Activated CD8-positive, alpha-beta T cell treated with anti-CD3 and anti-CD28 coated beads for 36 hours (primary cell): ENCODE measurements at regions of chr14 and their contacts with region 1.

Region 1: GRCh38 chr14:102819176-102819628 is 42.0 kb downstream of the TRAF3 start:
- DNase-seq: peak; percentile 86
- ATAC-seq: peak; percentile 75
- H3K4me3 Mint-ChIP-seq: peak overlapping the region; percentile 55
- H3K27ac Mint-ChIP-seq: peak overlapping the region; percentile 92
- H3K4me1 Mint-ChIP-seq: peaks cover 80% of the 10 kb centered on the region
- H3K27me3 Mint-ChIP-seq: no peaks in the 10 kb centered on the region
- CTCF ChIP-seq: no peak

Region 2: DNA sequence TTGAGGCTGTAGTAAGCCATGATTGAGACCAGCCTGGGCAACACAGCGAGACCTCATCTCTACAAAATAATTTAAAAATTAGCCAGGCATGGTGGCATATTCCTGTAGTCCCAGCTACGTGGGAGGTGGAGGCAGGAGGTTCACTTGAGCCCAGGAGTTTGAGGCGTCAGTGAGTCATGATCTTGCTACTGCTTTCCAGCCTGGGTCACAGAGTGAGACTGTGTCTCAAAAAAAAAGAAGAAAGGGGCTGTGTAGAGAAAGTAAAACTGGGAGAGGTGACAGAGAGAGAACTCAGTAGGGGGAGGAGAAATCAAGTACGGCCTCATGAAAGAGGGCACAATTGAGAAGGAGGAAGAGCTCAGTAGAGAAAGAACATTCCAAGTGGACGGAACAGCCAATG is 444.1 kb before region 1 on chr14:
- CTCF ChIA-PET with region 1: no interaction called
- POLR2A ChIA-PET with region 1: no interaction called
- intact Hi-C with region 1: no loop called
- DNase-seq: peak; percentile 18
- ATAC-seq: peak; percentile 91
- H3K4me3 Mint-ChIP-seq: no peak overlapping the region
- H3K27ac Mint-ChIP-seq: peak overlapping the region; percentile 67
- H3K4me1 Mint-ChIP-seq: peaks cover 22% of the 10 kb centered on the region
- H3K27me3 Mint-ChIP-seq: no peaks in the 10 kb centered on the region
- CTCF ChIP-seq: no peak

Region 3: DNA sequence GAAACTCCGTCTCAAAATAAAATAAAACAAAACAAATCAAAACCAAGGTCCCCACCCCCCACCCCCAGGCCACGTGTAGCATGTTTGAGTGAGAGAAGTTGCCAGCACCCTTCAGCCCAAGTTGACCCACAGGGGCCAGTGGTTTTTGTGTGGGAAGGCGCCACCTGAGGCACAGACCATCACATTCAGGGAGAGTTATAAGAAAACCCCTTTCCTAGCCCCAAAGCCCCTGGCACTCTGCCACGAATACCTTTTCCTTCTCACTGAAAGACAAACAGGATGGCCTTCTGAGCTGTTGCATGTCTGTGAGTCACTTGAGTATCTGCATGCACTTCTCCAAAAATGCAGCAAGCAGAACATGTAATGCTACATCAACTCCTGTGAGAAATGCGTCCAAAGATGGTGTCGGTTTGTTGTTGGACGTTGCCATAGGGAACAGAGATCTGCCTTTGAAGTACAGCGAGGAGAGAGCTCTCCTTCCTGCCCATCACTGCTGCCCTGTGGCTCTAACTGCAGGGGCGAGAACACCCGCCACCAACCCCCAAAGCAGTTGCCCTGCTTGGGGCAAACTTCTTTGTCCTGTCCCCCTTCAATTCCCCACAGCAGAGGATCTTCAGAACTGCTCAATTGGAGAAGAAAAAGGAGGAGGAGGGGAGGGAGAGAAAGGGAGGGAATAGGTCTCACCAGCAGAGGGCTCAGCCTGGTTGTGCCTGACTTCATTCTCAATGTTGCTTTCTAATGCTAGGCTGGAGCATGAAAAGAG is 44.6 kb before region 1 on chr14:
- CTCF ChIA-PET with region 1: interaction called, 9 read pairs
- POLR2A ChIA-PET with region 1: interaction called, 6 read pairs
- intact Hi-C with region 1: loop called (anchors 5 kb)
- DNase-seq: peak; percentile 70
- ATAC-seq: peak; percentile 45
- H3K4me3 Mint-ChIP-seq: peak overlapping the region; percentile 28
- H3K27ac Mint-ChIP-seq: peak overlapping the region; percentile 85
- H3K4me1 Mint-ChIP-seq: peaks cover 36% of the 10 kb centered on the region
- H3K27me3 Mint-ChIP-seq: no peaks in the 10 kb centered on the region
- CTCF ChIP-seq: peak; percentile 68

Region 4: DNA sequence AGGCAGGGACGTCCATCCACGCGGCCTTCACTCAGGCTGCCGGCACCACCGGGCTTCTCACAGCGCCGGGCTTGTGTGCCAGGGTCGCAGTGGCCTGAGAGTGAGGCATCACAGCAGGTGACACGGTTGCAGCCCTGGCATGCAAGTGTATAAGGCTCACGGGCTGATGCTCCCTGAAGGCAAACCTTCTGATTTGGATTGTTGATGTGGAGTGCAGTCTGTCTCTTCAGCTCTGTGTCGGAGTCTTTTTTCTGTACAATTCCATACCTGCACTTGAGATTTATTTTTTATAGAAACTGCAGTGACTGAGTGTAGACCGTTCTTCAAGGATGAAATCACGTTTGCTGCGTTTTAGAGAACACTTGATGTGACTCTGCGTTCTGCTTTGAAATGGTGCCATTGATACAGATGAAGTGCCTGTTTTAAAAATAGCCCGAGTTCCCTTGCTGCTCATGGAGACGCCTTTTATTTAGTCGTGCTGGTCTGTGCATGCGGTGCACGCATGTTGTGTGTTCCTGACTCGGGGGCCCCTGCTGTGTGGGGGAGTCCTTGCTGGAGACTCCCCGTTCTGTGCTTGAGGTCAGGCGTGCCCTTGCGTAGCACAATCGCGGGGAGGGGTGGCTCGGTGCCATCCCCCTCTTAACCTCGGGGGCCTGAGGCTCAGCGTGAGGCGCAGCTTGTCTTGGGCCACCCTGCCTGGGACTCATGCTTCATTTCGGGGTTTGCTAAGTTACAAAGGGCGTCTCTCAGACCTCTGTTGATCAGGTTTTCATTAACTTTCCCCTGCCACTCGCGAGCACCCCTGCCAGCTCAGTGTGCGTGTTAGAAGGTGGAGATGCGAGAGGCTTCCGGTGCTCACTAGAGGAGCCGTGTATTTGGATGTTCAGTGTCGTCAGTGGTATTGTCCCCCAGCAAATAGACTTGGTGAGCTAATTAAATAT is 81.7 kb after region 1 on chr14:
- CTCF ChIA-PET with region 1: no interaction called
- POLR2A ChIA-PET with region 1: no interaction called
- intact Hi-C with region 1: no loop called
- DNase-seq: peak; percentile 35
- ATAC-seq: peak; percentile 78
- H3K4me3 Mint-ChIP-seq: peak overlapping the region; percentile 32
- H3K27ac Mint-ChIP-seq: peak overlapping the region; percentile 82
- H3K4me1 Mint-ChIP-seq: peaks cover 21% of the 10 kb centered on the region
- H3K27me3 Mint-ChIP-seq: no peaks in the 10 kb centered on the region
- CTCF ChIP-seq: no peak